Endothelial cell of umbilical vein (primary cell): ENCODE measurements at regions of chr4 and their contacts with region 1.

Region 1: DNA sequence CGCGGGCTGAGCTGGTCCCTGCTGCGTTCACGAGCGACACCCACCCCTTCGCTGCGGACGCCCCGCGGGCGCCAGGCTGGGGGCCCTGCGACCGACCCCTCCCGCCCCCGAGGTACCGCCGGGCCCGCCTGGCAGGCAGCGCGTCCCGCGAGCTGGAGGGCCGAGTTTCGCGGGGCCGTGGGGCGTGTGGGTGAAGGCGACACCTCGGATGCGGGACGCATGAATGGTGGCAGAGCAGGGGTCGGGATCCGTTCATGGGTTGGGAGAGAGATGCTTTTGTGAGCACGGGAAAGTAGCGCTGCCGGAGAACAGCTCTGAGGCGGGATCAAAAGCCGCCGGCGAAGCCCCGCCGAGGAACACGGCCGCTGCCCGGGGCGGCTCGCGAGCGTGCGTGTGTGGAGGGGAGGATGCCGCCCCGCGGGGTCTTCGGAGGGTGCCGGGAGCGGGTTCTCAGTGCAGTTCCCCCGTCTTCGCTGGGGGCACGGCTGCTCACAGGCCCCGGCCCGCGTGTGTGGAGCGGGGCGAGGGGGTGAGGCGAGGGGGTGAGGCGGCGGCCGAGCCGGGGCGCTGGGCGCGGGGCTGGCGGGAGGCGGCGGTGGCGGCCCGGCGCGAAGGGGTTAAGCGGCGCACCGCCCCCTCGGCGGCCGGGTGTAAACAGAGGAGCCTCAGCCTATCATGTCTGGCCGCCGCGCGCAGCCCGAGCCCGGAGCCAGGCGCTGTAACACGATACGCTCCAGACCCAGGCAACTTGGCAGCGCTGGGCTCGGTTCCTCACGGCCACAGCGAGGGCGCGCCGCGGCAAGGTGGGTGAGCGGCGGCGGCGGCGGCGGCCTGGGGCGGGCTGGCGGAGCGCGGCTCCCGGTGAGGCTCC is 205.3 kb downstream of the TENM3 start:
- DNase-seq: peak; percentile 87
- H3K4me3 ChIP-seq: peak overlapping the region; percentile 31 to 47 (median 40)
- H3K27ac ChIP-seq: no peak overlapping the region
- H3K4me1 ChIP-seq: peaks cover 11% of the 10 kb centered on the region
- H3K27me3 ChIP-seq: peaks cover 31 to 55% of the 10 kb centered on the region in 2 experiments
- CTCF ChIP-seq: no peak
- POLR2A ChIP-seq: no peak

Region 2: DNA sequence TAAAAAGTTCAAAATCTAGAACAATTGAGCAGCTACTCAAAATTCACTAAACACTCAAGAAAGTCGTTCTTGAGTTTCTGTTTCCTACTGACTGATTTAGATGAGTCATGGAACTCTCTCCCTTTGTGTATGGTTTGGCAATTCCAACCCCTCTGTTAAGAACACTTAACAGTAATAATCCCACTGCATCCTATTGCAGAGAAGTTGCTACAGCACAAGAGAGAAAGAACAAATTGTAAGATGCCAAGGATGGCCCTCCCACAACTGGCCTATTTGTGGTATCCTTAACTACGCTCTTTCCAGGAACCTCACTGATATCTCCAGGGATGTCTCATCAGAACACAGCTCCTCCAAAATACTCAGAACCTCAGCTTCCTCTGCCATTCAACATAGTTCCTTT is 907.1 kb before region 1 on chr4:
- CTCF ChIA-PET with region 1: no interaction called
- POLR2A ChIA-PET with region 1: no interaction called
- dilution Hi-C with region 1: no loop called
- intact Hi-C with region 1: no loop called
- DNase-seq: no peak
- H3K4me3 ChIP-seq: no peak overlapping the region
- H3K27ac ChIP-seq: no peak overlapping the region
- H3K4me1 ChIP-seq: no peaks in the 10 kb centered on the region
- H3K27me3 ChIP-seq: no peaks in the 10 kb centered on the region
- CTCF ChIP-seq: no peak
- POLR2A ChIP-seq: no peak

Region 3: GRCh38 chr4:181784881-181785280 is 663.6 kb before region 1 on chr4:
- CTCF ChIA-PET with region 1: no interaction called
- POLR2A ChIA-PET with region 1: no interaction called
- dilution Hi-C with region 1: no loop called
- intact Hi-C with region 1: no loop called
- DNase-seq: no peak
- H3K4me3 ChIP-seq: no peak overlapping the region
- H3K27ac ChIP-seq: no peak overlapping the region
- H3K4me1 ChIP-seq: no peaks in the 10 kb centered on the region
- H3K27me3 ChIP-seq: no peaks in the 10 kb centered on the region
- CTCF ChIP-seq: no peak
- POLR2A ChIP-seq: no peak

Region 4: GRCh38 chr4:182143822-182144625 is 304.5 kb before region 1 on chr4:
- CTCF ChIA-PET with region 1: no interaction called
- POLR2A ChIA-PET with region 1: no interaction called
- dilution Hi-C with region 1: no loop called
- intact Hi-C with region 1: loop called (anchors 5 kb)
- DNase-seq: no peak
- H3K4me3 ChIP-seq: peak overlapping the region; percentile 35 to 43 (median 38)
- H3K27ac ChIP-seq: no peak overlapping the region
- H3K4me1 ChIP-seq: peaks cover 8% of the 10 kb centered on the region
- H3K27me3 ChIP-seq: peaks cover 46 to 82% of the 10 kb centered on the region in 2 experiments
- CTCF ChIP-seq: no peak
- POLR2A ChIP-seq: no peak

Region 5: GRCh38 chr4:182679533-182679932 is 231.0 kb after region 1 on chr4:
- CTCF ChIA-PET with region 1: no interaction called
- POLR2A ChIA-PET with region 1: no interaction called
- dilution Hi-C with region 1: no loop called
- intact Hi-C with region 1: no loop called
- DNase-seq: no peak
- H3K4me3 ChIP-seq: no peak overlapping the region
- H3K27ac ChIP-seq: no peak overlapping the region
- H3K4me1 ChIP-seq: no peaks in the 10 kb centered on the region
- H3K27me3 ChIP-seq: no peaks in the 10 kb centered on the region
- CTCF ChIP-seq: no peak
- POLR2A ChIP-seq: no peak

Region 6: DNA sequence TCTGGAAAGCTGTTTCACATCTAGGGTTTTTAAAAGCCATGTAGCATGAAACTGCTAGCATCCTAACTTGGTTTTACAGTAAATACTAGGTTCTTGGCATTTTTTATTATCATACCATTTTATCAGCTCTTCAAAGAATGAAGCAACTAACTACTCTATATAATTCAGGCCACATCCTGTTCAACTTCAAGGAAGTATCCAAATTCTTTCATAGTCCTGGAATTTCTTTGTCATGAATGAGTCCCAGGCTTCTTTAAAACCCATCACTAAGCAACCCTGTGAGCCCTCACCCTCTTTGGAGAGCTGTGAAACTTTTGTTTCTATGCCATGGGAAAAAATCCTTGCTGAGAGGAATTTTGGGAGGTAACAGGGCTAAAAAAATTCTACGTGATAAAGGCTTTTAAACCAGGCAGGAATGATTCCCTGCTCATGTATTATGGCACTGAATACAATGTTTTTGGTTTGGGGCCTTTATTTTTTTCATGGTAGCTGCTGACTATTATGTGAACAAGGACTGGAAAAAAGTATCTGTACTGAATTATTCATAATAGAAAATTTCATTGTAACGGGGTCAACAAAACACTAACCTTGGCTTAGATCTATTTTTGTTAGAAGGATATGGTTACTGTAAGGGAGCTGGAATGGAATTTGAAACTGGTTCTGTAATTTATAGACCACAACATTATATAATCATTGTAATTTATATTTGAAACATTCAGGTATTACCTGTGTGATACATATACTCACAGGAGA is 303.8 kb after region 1 on chr4:
- CTCF ChIA-PET with region 1: no interaction called
- POLR2A ChIA-PET with region 1: no interaction called
- dilution Hi-C with region 1: no loop called
- intact Hi-C with region 1: loop called (anchors 2 kb)
- DNase-seq: peak; percentile 67
- H3K4me3 ChIP-seq: no peak overlapping the region
- H3K27ac ChIP-seq: peak overlapping the region; percentile 77
- H3K4me1 ChIP-seq: peaks cover 34% of the 10 kb centered on the region
- H3K27me3 ChIP-seq: no peaks in the 10 kb centered on the region
- CTCF ChIP-seq: no peak
- POLR2A ChIP-seq: no peak

Region 7: DNA sequence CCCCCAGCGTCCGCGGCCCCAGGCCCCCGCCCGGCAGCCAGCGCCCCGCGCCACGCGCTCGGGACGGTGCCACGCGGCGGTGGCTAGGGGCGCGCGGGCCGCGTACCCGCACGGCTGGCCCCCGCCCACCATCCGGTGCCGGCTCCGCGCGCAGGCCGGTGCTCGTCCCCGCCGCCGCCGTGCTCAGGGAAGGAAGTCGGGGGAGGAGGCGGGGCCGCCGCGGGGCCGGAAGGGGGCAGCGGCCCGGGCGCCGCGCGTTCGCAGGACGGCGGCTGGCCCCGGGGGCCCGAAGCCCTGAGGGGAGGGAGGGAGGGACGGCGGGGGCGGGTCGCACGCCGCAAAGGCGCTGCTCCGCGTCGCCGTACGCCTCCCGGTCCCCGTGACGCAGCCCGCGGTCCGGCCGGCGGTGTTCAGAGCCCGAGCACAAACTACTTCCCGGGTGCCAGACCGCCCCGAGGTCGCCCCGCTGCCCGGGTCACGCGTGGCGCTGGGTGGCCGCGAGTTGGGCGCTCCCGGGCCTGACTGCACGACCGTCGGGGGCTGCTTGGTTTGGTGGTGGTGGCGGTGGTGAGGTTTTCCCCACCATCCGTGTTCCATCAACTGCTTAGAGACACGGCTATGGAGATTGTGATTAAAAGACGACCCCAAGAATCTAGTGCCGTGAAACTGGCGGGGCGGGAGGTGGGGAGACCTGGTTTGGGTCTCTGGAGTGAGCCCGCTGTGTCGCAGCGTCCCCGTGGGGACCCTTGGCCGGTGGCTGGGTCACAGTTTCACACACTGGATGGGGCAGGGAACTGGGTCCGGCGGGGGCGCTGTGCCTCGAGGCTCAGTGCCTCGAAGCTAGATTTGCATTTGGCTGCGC is 468.9 kb after region 1 on chr4 and contains the start of gene DCTD:
- CTCF ChIA-PET with region 1: no interaction called
- POLR2A ChIA-PET with region 1: no interaction called
- dilution Hi-C with region 1: no loop called
- intact Hi-C with region 1: loop called (anchors 1 kb)
- DNase-seq: peak; percentile 60
- H3K4me3 ChIP-seq: peak within 1 kb of the TSS; percentile 63 to 76 (median 70)
- H3K27ac ChIP-seq: peak within 1 kb of the TSS; percentile 82
- H3K4me1 ChIP-seq: peaks cover 16% of the 10 kb centered on the region
- H3K27me3 ChIP-seq: peaks cover 2 to 9% of the 10 kb centered on the region in 2 experiments
- CTCF ChIP-seq: peak; percentile 38 to 63
- POLR2A ChIP-seq: peak; percentile 21
- total RNA-seq, gene DCTD: 106 and 111 TPM in 2 replicates